Naive thymus-derived CD4-positive, alpha-beta T cell (primary cell): ENCODE measurements at regions of chr6 and their contacts with region 1.

Region 1: GRCh38 chr6:44257025-44257752 is at the start of gene SLC35B2:
- DNase-seq: peak; percentile 53 to 83 (median 69)
- ATAC-seq: peak; percentile 87
- H3K4me3 ChIP-seq: peak within 1 kb of the TSS; percentile 74
- H3K4me3 Mint-ChIP-seq: peak within 1 kb of the TSS; percentile 80 to 94 (median 92)
- H3K27ac ChIP-seq: peak within 1 kb of the TSS; percentile 87
- H3K27ac Mint-ChIP-seq: peak within 1 kb of the TSS; percentile 75 to 97 (median 89)
- H3K4me1 ChIP-seq: peaks cover 14 to 18% of the 10 kb centered on the region in 2 donors
- H3K4me1 Mint-ChIP-seq: peaks cover 21 to 64% (median 60%) of the 10 kb centered on the region in 7 donors
- H3K27me3 ChIP-seq: no peaks in the 10 kb centered on the region
- H3K27me3 Mint-ChIP-seq: no peaks in the 10 kb centered on the region
- total RNA-seq, gene SLC35B2: 10.0 to 32.1 (median 17.6) TPM

Region 2: GRCh38 chr6:44104481-44105021 is 152.6 kb before region 1 on chr6:
- CTCF ChIA-PET with region 1: no interaction called
- POLR2A ChIA-PET with region 1: no interaction called
- intact Hi-C with region 1: no loop called
- DNase-seq: no peak
- ATAC-seq: no peak
- H3K4me3 ChIP-seq: no peak overlapping the region
- H3K4me3 Mint-ChIP-seq: no peak overlapping the region
- H3K27ac ChIP-seq: no peak overlapping the region
- H3K27ac Mint-ChIP-seq: no peak overlapping the region
- H3K4me1 ChIP-seq: no peaks in the 10 kb centered on the region
- H3K4me1 Mint-ChIP-seq: peaks cover 0 to 20% (median 12%) of the 10 kb centered on the region in 7 donors
- H3K27me3 ChIP-seq: no peaks in the 10 kb centered on the region
- H3K27me3 Mint-ChIP-seq: no peaks in the 10 kb centered on the region

Region 3: GRCh38 chr6:44237813-44238433 is 19.3 kb before region 1 on chr6:
- CTCF ChIA-PET with region 1: interaction called, 3 read pairs
- POLR2A ChIA-PET with region 1: interaction called, 8 read pairs
- intact Hi-C with region 1: loop called in 1 of 2 experiments (anchors 2 kb)
- DNase-seq: peak; percentile 62 to 87 (median 80)
- ATAC-seq: peak; percentile 94
- H3K4me3 ChIP-seq: peak overlapping the region; percentile 93
- H3K4me3 Mint-ChIP-seq: peak overlapping the region; percentile 82 to 92 (median 90)
- H3K27ac ChIP-seq: peak overlapping the region; percentile 83
- H3K27ac Mint-ChIP-seq: peak overlapping the region; percentile 38 to 98 (median 89)
- H3K4me1 ChIP-seq: peaks cover 5 to 7% of the 10 kb centered on the region in 2 donors
- H3K4me1 Mint-ChIP-seq: peaks cover 0 to 28% (median 11%) of the 10 kb centered on the region in 7 donors
- H3K27me3 ChIP-seq: no peaks in the 10 kb centered on the region
- H3K27me3 Mint-ChIP-seq: no peaks in the 10 kb centered on the region